ENCODE measurements at regions of chr18 and their contacts with region 1.

Region 1: DNA sequence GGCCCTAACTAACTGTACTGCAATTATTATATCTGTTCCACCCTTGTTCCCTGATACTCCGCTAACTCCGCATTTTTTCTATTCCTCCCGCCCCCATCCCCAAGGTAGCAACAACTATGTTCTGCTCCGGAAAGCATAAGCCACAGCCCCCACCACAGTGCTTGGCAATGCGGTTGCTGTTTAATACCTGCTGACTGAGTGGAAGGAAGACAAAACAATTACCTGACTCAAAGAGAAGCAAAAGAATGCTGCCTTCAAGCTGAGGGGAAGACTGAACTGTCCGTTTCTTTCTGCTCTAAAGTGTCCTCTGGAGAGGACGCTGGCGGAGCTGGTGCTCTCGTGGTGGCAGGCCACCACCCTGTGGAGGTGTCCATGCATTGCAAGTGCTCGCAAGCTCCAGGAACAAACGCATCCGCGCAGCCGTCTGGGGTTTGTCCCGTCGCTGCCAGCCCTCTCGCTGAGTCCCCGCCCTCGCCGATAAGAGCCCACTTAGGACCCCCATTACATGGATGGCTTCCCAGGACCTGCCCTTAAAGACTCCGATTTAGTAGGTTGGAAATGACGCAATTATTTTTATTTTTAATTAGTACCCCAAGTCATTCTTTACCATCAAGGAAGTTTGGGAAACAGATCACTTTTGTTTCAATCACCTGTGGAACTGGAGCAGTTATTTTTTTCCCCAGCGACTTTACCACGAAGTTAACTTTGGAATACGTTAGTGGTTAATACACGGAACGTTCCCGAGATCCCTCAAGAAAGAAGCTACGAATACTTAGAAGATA is 1.6 kb upstream of the MYL12A start:
- DNase-seq: peak; percentile 73 to 98 (median 85)

Region 2: GRCh38 chr18:2758309-2758708 is 487.7 kb before region 1 on chr18:
- intact Hi-C with region 1: loop called (anchors 10 kb)
- DNase-seq: no peak

Region 3: DNA sequence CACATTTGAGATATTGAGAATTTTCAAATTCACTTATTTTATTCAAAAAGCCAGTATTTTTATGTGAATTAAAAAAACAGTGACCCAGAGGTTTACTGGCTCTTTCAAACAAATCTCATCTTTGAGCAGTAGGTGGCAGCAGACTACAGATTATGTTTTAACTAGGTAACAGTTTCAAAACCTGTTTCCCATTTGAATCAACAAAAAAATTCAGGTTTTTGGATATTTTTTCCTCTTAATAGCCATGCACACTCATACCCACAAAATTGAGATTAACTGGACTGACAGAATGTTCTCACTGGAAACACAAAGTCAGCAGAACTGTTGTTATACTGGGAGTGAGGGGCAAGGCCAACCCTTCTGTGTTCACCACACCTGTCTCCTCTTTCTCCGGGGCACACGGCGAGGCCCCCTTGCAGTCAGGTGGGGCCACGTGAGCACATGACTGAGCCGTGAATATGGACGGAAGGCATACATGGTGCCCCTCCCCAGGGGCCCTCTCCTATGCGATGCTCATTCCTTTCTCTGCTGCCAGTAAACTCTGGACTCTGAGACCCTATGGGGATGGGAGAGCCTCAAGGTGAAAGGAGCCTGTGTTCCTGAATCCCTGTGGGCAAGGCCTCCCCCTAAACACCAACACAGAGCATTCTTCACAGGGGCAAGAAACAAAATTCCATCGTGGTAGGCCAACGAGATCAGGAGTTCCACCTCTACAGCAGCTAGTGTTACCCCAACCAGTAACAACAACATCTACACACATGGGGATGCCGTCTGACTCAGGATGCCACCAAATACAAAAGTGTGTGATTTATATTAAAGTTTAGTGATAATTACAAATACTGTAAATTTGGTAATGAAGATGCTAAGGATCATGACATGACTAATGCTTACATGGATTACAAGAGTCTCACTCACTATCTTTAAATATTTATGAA is 313.5 kb before region 1 on chr18:
- intact Hi-C with region 1: loop called (anchors 2 kb)
- DNase-seq: no peak

Region 4: DNA sequence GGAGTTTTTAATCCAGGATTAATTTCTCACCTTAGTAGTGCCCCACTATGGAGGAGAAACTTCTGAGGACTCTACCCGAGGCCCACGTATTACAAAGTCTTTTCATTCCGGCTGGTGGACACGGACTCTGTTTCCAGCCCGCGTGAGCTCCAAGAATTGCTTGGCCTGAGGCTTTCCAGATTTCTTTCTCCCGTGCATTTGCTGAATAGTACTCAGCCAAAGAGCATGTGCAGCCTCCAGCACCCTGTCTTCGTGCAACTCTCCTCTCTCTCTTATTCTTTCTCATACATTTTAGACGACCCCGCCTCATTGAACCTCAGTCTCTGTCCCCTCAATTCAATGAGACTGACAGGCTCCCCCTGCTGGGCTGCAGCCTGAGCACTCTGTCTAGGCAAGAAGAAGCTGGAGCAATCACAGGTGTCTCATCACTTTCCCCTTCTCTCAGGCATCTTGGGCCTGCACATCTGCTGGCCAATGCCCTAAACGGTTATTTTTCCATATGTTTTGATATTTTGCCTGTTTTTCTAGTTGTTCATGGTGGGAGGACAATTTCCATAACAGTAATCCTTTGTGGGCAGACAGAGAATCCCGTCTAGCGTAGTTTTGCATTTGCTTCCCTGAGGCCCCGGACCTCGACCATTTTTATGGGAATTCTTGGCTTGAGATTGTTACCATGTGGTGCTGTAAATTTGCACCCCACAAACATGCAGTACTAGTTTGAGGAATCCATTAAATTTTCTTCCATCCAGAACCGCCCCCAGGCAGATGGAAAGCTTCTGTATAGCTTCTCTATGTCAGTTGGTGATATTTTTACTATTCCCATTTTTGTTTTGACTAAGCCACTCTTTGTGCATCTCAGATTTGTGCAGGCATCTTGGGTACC is 183.0 kb before region 1 on chr18:
- intact Hi-C with region 1: loop called (anchors 5 kb)
- DNase-seq: peak; percentile 31 to 94 (median 73)

Region 5: DNA sequence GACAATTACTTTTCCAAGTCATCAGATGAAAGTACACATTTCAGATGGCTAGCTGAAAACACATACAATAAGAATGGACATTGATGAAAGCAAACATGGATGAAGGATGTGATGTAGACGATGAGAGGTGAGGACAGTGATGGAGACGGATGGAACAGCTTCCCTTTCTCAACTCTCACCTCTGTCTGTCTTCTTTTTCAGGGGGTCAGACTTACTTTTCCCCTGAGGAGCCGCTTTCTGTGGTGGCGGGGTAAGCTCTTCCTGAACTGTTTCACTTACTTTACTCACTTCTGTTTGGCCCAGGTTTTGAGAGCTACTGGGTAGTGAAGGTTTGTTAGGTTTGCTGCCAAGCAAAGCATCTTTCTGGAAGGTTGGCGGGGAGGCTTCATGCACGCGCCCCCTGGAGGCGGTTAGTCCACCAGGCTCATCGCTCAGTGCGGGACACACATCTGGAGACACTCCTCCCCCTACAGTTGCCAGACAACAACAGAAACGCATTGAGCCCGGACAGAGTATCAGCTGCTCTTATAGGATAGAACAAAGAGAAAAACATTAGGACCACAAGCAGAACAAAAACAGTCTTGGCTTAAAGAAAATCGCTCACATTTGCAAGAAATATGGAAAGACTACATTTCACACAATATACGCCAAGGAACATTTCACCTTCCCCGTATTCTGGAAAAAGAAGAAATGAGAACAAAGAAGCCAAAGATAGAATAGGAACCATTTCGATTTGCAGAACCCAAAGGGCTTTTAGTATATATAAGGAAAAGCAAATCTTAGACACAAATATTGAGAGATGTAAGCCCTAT is 116.8 kb before region 1 on chr18:
- intact Hi-C with region 1: loop called (anchors 10 kb)
- DNase-seq: peak; percentile 61 to 97 (median 83)

Region 6: DNA sequence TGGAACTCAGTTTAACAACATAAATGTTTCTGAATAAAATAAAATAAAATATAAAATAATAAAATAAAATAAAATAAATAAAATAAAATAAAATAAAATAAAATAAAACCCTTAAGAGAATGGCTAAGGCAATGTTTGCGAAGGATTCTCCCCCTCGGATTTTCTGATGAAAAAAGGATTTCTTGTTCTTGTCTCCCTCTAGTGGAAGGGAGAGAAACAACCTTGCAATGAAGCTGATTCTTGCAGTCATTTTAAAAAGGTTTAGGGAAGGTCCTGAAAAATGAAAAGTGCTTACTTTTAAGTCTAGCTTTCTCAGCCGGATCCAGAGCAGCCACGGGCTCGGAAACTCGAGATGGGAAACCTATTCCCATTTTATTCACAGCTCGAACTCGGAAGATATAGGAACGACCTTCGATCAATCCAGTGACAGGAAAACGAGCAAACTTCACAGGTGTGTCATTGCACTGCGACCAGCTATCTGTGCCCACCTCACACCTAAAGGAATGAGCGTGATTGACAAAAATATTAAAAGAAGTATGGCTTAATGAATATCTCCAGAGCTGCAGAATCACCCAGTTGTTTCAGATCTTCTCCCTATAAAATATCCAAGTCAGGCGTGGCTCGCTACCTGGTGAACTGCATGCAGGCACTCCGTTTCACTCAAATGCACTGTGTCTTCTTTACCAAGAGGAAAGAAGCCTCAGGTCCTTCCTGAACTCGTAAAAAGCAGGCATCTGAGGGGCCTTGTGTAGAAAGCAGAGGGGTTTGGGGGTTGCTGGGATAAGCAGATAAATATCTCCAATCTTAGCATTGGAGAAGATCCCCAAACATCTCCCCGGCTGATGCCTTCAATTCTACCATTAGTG is 94.4 kb before region 1 on chr18:
- intact Hi-C with region 1: loop called (anchors 5 kb)
- DNase-seq: no peak

Region 7: GRCh38 chr18:3194947-3195612 is 51.0 kb before region 1 on chr18:
- intact Hi-C with region 1: no loop called
- DNase-seq: no peak

Region 8: GRCh38 chr18:3281456-3282400 is 35.7 kb after region 1 on chr18:
- intact Hi-C with region 1: no loop called
- DNase-seq: no peak

Region 9: GRCh38 chr18:4264347-4264791 is 1018.3 kb after region 1 on chr18:
- intact Hi-C with region 1: no loop called
- DNase-seq: no peak

Measured in posterior cingulate gyrus (tissue), 11 donors.